ENCODE measurements at regions of chr14 and their contacts with region 1.

Region 1: GRCh38 chr14:65933400-65934084 is 521.0 kb downstream of the FUT8 start:
- DNase-seq: no peak
- ATAC-seq: no peak
- H3K4me3 ChIP-seq: no peak overlapping the region
- H3K4me3 Mint-ChIP-seq: no peak overlapping the region
- H3K27ac ChIP-seq: no peak overlapping the region
- H3K27ac Mint-ChIP-seq: no peak overlapping the region
- H3K4me1 ChIP-seq: peaks cover 41% of the 10 kb centered on the region
- H3K4me1 Mint-ChIP-seq: peaks cover 48% of the 10 kb centered on the region
- H3K27me3 ChIP-seq: no peaks in the 10 kb centered on the region
- H3K27me3 Mint-ChIP-seq: no peaks in the 10 kb centered on the region
- CTCF ChIP-seq: no peak

Region 2: GRCh38 chr14:65658202-65658601 is 275.3 kb before region 1 on chr14:
- CTCF ChIA-PET with region 1: no interaction called
- POLR2A ChIA-PET with region 1: no interaction called
- intact Hi-C with region 1: no loop called
- DNase-seq: no peak
- ATAC-seq: no peak
- H3K4me3 ChIP-seq: no peak overlapping the region
- H3K4me3 Mint-ChIP-seq: no peak overlapping the region
- H3K27ac ChIP-seq: no peak overlapping the region
- H3K27ac Mint-ChIP-seq: no peak overlapping the region
- H3K4me1 ChIP-seq: no peaks in the 10 kb centered on the region
- H3K4me1 Mint-ChIP-seq: peaks cover 4% of the 10 kb centered on the region
- H3K27me3 ChIP-seq: no peaks in the 10 kb centered on the region
- H3K27me3 Mint-ChIP-seq: no peaks in the 10 kb centered on the region
- CTCF ChIP-seq: no peak

Region 3: DNA sequence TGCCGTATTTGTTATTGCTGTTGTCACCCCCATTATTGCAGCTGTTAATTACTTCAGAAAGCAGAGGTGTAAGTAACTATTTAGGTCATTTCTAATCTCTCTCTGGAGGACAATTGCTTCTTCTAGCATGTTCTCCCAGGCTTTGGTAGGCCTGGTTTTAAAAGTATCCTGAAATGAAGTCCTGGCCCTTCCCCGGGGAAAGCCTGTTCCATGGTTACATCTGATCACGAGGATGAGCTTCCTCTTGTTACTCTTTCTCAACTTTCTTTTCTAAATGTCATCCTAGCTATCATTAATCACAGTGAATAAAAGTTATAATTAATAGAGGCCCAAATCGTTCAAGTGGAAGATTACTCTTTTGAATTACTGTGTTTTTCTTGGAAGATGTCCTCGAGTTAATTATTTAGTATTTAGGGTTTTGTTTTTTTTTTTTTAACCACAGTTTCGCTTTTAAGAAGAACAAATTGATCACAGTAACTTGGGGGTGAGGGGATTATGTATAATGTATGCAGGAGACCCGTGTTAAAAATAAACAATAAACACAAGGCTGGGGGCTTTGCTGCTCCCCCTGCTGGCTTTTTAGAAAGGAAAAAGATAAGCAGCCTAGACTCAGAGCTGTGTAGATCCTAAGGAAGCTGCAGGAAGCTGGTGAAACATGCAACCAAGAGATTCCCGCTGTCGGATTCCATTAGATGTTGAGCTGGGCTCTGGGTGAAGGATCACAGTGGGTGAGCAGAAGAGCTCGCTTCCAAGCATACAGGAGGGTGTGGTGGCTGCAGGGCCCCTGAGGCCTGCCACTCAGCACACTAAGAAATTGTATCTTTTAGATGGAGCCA is 100.9 kb before region 1 on chr14:
- CTCF ChIA-PET with region 1: no interaction called
- POLR2A ChIA-PET with region 1: no interaction called
- intact Hi-C with region 1: loop called in 1 of 2 experiments (anchors 5 kb)
- DNase-seq: no peak
- ATAC-seq: no peak
- H3K4me3 ChIP-seq: no peak overlapping the region
- H3K4me3 Mint-ChIP-seq: no peak overlapping the region
- H3K27ac ChIP-seq: no peak overlapping the region
- H3K27ac Mint-ChIP-seq: no peak overlapping the region
- H3K4me1 ChIP-seq: peaks cover 16% of the 10 kb centered on the region
- H3K4me1 Mint-ChIP-seq: peaks cover 50% of the 10 kb centered on the region
- H3K27me3 ChIP-seq: no peaks in the 10 kb centered on the region
- H3K27me3 Mint-ChIP-seq: no peaks in the 10 kb centered on the region
- CTCF ChIP-seq: no peak

Region 4: DNA sequence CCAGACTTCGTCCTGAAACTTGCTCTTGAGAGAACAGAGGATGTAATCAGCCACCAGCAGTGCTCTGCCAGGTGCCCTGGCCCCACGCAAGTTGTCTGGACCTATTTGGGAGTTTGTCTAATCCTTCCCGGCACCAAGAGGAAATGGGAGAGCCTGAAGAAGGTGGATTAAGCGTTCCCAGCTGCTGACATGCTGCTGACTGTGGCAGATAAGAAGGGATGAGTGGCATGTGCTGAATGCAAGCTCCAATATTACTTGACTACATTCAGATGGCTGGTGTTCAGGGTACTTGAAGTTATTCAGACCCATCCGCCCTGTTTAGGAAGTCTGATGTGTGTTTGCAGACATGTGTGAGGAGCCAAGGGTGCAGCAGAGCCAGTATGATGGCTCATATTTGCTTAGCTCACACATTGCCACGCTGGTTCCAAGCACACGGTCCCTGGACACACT is 112.1 kb after region 1 on chr14:
- CTCF ChIA-PET with region 1: no interaction called
- POLR2A ChIA-PET with region 1: no interaction called
- intact Hi-C with region 1: no loop called
- DNase-seq: no peak
- ATAC-seq: no peak
- H3K4me3 ChIP-seq: no peak overlapping the region
- H3K4me3 Mint-ChIP-seq: no peak overlapping the region
- H3K27ac ChIP-seq: no peak overlapping the region
- H3K27ac Mint-ChIP-seq: no peak overlapping the region
- H3K4me1 ChIP-seq: no peaks in the 10 kb centered on the region
- H3K4me1 Mint-ChIP-seq: no peaks in the 10 kb centered on the region
- H3K27me3 ChIP-seq: peaks cover 0 to 4% of the 10 kb centered on the region in 2 experiments
- H3K27me3 Mint-ChIP-seq: peaks cover 12% of the 10 kb centered on the region
- CTCF ChIP-seq: no peak

Measured in CD4-positive, alpha-beta T cell (primary cell).